H1 (cell line): ENCODE measurements at regions of chr6 and their contacts with region 1.

Region 1: DNA sequence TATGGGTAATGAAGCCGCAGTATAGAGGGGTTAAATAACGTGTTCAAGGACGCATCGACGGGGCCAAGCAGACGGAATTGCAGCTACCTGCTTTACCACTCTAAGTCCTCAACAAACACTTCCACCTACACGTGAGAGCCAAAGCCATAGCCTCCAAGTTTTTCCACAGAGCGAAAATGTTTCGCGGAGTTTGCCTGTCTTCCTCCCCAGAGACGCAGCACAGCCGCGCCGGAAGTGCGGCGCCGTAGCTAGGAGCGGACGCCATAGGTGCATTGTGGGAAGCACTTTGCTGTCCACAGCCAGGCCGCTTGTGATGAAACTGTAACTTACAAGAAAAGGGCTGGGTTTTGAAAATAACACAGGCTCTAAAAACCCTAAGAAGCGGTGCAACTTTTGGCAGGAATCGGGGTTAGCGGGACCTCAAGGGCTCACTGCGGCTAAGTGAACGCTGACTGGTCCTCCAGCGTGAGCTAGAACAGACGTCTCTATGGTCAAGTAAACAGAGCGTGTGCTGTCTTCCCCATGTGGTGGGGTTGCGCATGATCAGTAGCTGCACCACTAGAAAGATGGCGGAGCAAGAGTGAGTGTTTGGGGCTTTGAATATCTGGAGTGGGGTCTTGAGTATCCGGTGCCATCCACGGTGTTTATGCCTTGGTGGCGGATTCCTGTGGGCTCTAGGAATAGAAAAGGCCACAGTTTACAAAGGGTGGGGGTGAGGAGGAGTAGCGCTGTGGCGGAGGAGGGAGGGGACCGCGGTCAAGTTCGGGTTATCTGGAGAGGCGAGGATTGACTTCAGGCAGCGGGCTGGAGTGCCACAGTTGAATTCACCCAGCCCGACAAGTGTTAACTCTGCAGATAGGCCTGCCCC is at the start of gene RPL7L1:
- DNase-seq: peak in 1 of 2 experiments; percentile 85
- H3K4me3 ChIP-seq: peak within 1 kb of the TSS; percentile 89 to 99 (median 97)
- H3K27ac ChIP-seq: peak within 1 kb of the TSS; percentile 93
- H3K4me1 ChIP-seq: no peaks in the 10 kb centered on the region
- H3K27me3 ChIP-seq: no peaks in the 10 kb centered on the region
- CTCF ChIP-seq: no peak
- EP300 ChIP-seq: no peak
- POLR2A ChIP-seq: peak; percentile 92 to 97
- RAD21 ChIP-seq: no peak
- total RNA-seq, gene RPL7L1: 112 and 117 TPM in 2 replicates

Region 2: GRCh38 chr6:42704241-42704936 is 175.2 kb before region 1 on chr6:
- CTCF ChIA-PET with region 1: interaction called, 4 read pairs
- POLR2A ChIA-PET with region 1: interaction called, 14 read pairs
- DNase-seq: peak in 1 of 2 experiments; percentile 57
- H3K4me3 ChIP-seq: peak overlapping the region in 2 of 4 experiments; percentile 2 to 43; a peak in 3 of 8 replicates
- H3K27ac ChIP-seq: no peak overlapping the region
- H3K4me1 ChIP-seq: peaks cover 0 to 6% (median 1%) of the 10 kb centered on the region in 4 experiments; a peak in 3 of 7 replicates
- H3K27me3 ChIP-seq: no peaks in the 10 kb centered on the region
- CTCF ChIP-seq: no peak
- EP300 ChIP-seq: no peak
- POLR2A ChIP-seq: peak in 1 of 2 experiments; percentile 63; a peak in 2 of 3 replicates
- RAD21 ChIP-seq: no peak

Region 3: DNA sequence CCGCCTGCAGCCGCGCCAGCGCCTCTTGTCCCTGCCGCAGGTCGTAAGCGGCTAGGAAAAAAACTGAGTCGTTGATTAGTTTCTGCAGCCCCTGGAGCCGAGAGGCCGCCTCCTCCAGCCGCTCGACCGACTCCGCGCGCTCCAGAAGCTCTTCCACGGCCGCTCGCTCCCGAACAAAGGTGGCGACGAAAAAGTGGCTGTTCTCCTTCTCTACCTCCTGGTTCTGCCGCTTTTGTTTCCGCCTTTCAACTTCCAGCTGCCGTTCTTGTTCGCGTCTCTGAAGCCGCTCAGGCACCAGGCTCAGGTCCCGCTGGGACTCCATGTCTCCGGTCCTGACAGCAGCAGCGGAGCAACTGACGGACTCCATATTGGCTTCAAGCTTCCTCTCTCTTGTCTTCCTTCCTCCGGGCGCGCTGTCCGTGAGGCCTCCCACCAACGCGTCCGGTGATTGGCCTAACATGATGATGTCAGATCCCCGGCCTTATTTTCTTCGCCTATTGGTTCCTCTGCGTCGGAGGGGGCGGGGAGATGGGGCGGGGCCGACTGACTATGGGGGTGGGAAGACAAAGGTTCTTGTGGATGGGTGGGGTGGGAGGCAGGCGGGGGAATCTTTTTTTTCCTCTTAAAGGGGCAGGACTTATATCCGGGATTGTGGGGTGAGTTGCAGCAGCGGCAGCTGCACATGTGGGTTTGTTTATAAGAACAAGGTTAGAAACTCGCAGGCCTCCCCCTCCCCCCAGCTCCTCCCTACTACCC is 133.7 kb before region 1 on chr6 and contains the start of gene TBCC:
- CTCF ChIA-PET with region 1: interaction called, 4 read pairs
- POLR2A ChIA-PET with region 1: interaction called, 12 read pairs
- DNase-seq: peak; percentile 86 to 96
- H3K4me3 ChIP-seq: peak within 1 kb of the TSS; percentile 88 to 99 (median 96)
- H3K27ac ChIP-seq: peak within 1 kb of the TSS; percentile 84
- H3K4me1 ChIP-seq: peaks cover 5 to 7% (median 6%) of the 10 kb centered on the region in 4 experiments; a peak in 6 of 7 replicates
- H3K27me3 ChIP-seq: no peaks in the 10 kb centered on the region
- CTCF ChIP-seq: no peak
- EP300 ChIP-seq: no peak
- POLR2A ChIP-seq: peak; percentile 89 to 91
- RAD21 ChIP-seq: no peak
- total RNA-seq, gene TBCC: 25.5 and 27.3 TPM in 2 replicates

Region 4: GRCh38 chr6:42813906-42814444 is 65.6 kb before region 1 on chr6:
- CTCF ChIA-PET with region 1: no interaction called
- POLR2A ChIA-PET with region 1: no interaction called
- DNase-seq: no peak
- H3K4me3 ChIP-seq: no peak overlapping the region
- H3K27ac ChIP-seq: no peak overlapping the region
- H3K4me1 ChIP-seq: peaks cover 0 to 3% (median under 1%) of the 10 kb centered on the region in 4 experiments; a peak in 3 of 7 replicates
- H3K27me3 ChIP-seq: no peaks in the 10 kb centered on the region
- CTCF ChIP-seq: no peak
- EP300 ChIP-seq: no peak
- POLR2A ChIP-seq: no peak
- RAD21 ChIP-seq: no peak

Region 5: DNA sequence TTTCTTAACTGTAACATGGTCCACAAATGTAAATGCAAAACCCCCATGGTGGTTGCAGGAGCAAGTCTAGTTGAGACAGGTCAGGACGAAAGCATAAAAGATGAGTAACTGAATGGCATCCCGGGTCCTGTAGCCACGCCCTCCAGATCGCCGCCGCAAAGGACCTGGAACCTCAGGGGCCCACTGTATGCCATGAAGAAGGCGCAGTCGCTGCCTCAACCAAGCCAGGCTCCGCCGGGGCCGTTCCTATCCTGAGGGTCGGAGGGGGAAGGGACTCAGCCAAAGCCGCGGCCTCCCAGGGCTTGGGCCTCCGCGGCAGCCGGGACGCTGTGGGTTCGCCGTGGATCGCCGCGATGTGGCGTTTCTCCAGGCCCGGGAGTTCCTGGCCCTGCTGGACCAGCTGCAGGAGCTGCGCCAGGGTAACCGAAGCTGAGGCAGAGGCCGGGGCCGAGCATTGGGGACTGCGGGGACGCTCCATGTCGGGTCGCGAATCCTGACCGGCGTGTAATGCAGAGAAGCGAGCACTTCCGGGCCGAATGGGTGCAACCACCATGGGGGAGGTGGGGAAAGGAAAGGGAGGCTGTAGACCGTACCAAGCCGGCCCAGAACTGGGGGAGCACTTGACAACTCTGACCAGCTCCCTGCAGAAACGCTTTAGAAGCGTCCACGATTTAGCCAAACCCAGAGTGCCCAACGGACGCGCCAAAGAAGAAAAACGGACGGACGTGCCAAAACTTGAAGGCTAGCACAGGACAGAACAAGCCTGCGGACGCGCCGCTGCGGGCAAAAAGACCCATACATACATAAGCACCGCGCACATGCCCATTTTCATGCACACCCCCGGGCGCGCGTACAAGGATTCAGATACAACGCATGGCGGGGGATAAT is 10.9 kb after region 1 on chr6:
- CTCF ChIA-PET with region 1: no interaction called
- POLR2A ChIA-PET with region 1: interaction called, 130 read pairs
- DNase-seq: peak; percentile 91
- H3K4me3 ChIP-seq: peak overlapping the region; percentile 76 to 94 (median 84)
- H3K27ac ChIP-seq: peak overlapping the region; percentile 94
- H3K4me1 ChIP-seq: peaks cover 0 to 5% (median 4%) of the 10 kb centered on the region in 4 experiments; a peak in 5 of 7 replicates
- H3K27me3 ChIP-seq: no peaks in the 10 kb centered on the region
- CTCF ChIP-seq: no peak
- EP300 ChIP-seq: peak in 1 of 2 experiments; percentile 99; a peak in 2 of 3 replicates
- POLR2A ChIP-seq: peak; percentile 89 to 98
- RAD21 ChIP-seq: no peak